Posterior cingulate gyrus (tissue), 11 donors: ENCODE measurements at regions of chr22 and their contacts with region 1.

Region 1: DNA sequence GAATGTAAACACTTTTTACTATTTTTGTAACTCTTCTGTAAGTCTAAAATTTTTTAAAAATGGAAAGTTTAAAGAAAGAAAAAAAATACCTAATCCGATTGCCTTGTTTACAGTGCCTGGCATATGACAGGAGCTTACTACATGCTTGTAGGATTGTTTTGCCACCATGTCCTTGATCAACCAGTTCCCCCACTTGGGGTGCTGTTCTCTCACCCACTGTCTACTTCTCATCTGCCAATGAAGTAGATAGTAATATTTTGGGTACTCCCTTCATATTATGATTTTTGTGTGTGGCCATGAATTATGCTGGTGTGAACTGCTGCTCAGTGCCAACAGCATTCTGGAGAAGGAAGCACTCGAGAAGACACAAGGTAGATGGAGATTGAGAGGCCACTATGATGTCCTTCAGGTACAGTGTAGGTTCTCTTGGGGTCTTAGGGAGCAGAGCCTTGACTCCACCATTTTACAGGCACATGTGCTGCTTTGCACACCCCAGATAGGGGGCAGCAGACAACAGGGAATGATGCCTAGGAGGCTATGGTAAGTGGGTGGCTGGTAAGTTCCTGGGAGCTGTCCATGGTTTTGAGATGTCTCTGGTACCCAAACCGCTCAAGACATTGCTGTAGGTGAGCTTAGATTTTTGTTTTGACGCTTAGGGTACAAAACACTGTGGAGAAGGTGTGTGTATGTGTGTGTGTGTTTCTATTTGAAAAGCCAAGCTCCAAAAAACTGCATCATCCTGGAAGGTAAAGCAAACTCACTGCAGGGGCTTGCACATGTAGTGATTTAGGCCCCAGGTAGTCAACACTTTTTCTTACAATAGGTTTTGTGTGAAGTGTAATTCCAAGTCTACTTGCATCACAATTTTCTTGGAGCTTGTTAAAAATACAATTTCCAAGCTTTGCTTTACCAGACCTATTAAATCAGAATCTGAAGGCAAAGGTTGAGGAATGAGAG is 494.5 kb upstream of the LARGE1 start:
- DNase-seq: peak in 3 of 10 donors; percentile 10 to 79 (median 17)

Region 2: DNA sequence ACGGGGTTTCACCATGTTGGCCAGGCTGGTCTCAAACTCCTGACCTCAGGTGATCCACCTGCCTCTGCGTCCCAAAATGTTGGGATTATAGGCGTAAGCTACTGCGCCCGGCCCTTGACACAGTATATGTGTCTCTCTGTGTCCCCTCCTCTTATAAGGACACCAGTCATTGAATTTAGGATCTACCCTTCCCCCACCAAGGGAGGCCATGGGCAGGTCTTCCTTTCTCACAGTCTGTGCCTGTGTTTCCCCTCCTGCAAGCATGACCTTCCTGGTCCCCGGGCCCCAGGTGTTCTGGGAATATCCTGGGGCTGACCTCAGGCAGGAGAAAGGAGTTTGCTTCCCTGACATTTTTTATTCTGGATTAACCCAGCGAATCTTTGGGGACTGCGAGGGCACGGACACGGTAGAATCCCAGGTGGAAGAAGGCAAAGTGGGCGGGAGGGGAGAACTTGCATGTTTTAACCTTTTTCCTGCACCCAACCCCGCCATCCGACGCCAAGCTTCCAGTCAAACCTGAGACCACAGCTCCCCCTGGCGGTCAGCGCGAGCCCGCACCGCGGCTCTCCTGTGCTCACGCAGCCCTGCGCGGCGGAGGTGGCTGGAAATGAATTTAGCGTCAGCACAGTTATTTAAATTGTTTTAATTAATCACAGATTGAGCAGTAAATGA is 609.1 kb after region 1 on chr22:
- intact Hi-C with region 1: loop called (anchors 10 kb)
- DNase-seq: peak; percentile 40 to 96 (median 82)